CD4-positive, alpha-beta memory T cell (primary cell): ENCODE measurements at regions of chr9 and their contacts with region 1.

Region 1: DNA sequence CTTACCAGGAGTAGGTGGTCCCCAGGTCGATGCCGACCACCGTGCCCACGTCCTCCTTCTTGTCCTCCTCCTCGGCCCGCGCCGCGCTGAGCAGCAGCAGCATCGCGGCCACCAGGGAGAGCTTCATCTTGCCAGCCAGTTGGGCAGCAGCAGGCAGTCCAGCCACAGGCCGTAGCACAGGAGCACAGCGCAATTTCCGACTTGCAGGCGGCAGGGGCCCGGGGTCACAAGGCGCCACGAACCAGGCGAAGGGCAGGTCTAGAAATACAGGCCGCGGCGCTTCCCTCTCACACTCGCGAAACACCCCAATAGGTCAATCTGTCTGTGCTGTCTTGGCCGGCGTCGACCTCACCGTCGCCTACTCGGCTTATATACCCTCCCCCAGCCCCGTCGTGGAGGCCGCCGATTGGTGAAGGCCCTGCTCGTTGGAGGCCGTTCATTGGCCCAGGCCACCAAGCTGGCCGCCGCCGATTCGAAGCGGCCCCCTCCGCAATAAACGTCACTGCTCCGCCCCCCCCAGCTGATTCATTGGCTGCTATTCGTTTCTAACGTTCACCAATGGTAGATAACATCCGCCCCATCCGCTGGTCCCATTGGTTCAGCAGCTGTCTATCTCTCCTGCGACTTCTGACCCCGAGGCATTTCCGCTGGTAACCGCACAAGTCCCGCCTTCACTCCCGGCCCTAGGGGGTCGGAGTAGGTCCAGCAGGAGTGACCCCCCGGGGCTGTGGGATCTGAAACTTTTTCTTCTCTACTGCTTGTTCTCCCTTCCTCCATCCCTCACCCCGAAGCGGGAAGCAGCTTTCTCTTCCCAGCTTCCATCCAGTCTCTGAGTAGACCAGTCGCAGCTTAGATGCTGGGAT is at the start of gene HSPA5:
- DNase-seq: peak; percentile 99 to 100 (median 99)
- H3K4me3 ChIP-seq: peak within 1 kb of the TSS; percentile 92 to 100
- H3K4me3 Mint-ChIP-seq: peak within 1 kb of the TSS; percentile 92 to 99 (median 98)
- H3K27ac ChIP-seq: peak within 1 kb of the TSS; percentile 97
- H3K27ac Mint-ChIP-seq: peak within 1 kb of the TSS; percentile 97 to 100 (median 100)
- H3K4me1 ChIP-seq: peaks cover 50% of the 10 kb centered on the region
- H3K4me1 Mint-ChIP-seq: peaks cover 30 to 60% (median 42%) of the 10 kb centered on the region in 4 donors
- H3K27me3 ChIP-seq: no peaks in the 10 kb centered on the region
- H3K27me3 Mint-ChIP-seq: peaks cover 0 to 3% of the 10 kb centered on the region in 2 donors
- total RNA-seq, gene HSPA5: 147 to 154 TPM

Region 2: DNA sequence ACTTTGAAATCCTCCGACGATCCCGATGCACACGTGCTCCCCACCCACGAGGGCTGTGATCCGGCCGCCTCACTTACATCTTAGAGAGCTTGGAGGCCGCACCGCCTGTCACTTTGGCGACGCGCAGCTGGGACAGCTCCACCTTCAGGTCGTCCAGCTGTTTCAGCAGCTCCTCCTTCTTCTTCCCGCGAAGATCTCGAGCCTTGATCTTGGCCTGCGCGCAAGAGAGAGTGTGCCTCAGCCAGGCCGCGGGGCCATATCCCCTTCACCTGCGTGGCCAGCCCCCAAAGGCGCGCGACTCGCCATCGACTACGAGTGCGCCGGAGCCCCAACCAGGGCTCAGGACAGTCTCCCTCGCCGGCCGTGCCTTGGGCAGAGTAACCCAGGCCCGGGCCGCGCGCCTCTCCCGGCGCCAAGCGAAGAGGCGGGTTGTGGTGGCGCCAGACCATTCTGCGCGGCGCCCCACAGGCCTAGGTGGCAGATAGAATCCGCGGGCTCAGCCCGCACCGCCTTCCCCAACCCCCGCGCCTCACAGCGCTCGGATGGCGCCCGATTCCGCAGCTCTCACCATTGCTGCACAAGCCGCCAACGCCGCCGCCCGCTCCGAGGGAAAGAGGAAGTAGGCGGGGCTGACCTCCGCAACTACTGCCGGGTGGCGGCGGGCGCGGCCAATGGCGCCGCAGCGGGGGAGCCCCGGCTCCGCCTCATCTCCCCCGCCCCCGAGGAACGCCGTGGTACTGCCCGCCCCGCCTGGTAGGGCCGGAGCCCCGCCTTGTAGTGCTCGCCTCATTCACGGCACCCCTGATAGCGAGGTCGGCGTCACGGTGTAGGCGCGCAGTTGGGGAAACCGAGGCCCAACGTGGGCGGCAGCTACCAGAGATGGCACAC is 379.6 kb before region 1 on chr9 and contains the starts of genes ARPC5L and RPL35:
- CTCF ChIA-PET with region 1: no interaction called
- POLR2A ChIA-PET with region 1: interaction called, 14 read pairs
- intact Hi-C with region 1: loop called (anchors 1 kb)
- DNase-seq: peak; percentile 95 to 96 (median 95)
- H3K4me3 ChIP-seq: peak within 1 kb of the TSS; percentile 78 to 84
- H3K4me3 Mint-ChIP-seq: peak within 1 kb of the TSS; percentile 91 to 100 (median 96)
- H3K27ac ChIP-seq: peak within 1 kb of the TSS; percentile 95
- H3K27ac Mint-ChIP-seq: peak within 1 kb of the TSS; percentile 92 to 99 (median 98)
- H3K4me1 ChIP-seq: peaks cover 26% of the 10 kb centered on the region
- H3K4me1 Mint-ChIP-seq: peaks cover 20 to 41% (median 29%) of the 10 kb centered on the region in 4 donors
- H3K27me3 ChIP-seq: no peaks in the 10 kb centered on the region
- H3K27me3 Mint-ChIP-seq: no peaks in the 10 kb centered on the region
- total RNA-seq, gene ARPC5L: 26.8 to 31.4 TPM
- total RNA-seq, gene RPL35: 1,702 to 1,766 TPM

Region 3: GRCh38 chr9:125143375-125144090 is 97.7 kb before region 1 on chr9 and contains the start of gene SCAI:
- CTCF ChIA-PET with region 1: interaction called, 3 read pairs
- POLR2A ChIA-PET with region 1: interaction called, 9 read pairs
- intact Hi-C with region 1: loop called (anchors 1 kb)
- DNase-seq: peak; percentile 97 to 99 (median 99)
- H3K4me3 ChIP-seq: peak within 1 kb of the TSS in 1 of 2 donors; percentile 49
- H3K4me3 Mint-ChIP-seq: peak within 1 kb of the TSS; percentile 93 to 99 (median 98)
- H3K27ac ChIP-seq: peak within 1 kb of the TSS; percentile 16
- H3K27ac Mint-ChIP-seq: peak within 1 kb of the TSS; percentile 85 to 95 (median 91)
- H3K4me1 ChIP-seq: peaks cover 22% of the 10 kb centered on the region
- H3K4me1 Mint-ChIP-seq: peaks cover 17 to 34% (median 26%) of the 10 kb centered on the region in 4 donors
- H3K27me3 ChIP-seq: no peaks in the 10 kb centered on the region
- H3K27me3 Mint-ChIP-seq: no peaks in the 10 kb centered on the region
- total RNA-seq, gene SCAI: 14.7 to 15.5 TPM

Region 4: DNA sequence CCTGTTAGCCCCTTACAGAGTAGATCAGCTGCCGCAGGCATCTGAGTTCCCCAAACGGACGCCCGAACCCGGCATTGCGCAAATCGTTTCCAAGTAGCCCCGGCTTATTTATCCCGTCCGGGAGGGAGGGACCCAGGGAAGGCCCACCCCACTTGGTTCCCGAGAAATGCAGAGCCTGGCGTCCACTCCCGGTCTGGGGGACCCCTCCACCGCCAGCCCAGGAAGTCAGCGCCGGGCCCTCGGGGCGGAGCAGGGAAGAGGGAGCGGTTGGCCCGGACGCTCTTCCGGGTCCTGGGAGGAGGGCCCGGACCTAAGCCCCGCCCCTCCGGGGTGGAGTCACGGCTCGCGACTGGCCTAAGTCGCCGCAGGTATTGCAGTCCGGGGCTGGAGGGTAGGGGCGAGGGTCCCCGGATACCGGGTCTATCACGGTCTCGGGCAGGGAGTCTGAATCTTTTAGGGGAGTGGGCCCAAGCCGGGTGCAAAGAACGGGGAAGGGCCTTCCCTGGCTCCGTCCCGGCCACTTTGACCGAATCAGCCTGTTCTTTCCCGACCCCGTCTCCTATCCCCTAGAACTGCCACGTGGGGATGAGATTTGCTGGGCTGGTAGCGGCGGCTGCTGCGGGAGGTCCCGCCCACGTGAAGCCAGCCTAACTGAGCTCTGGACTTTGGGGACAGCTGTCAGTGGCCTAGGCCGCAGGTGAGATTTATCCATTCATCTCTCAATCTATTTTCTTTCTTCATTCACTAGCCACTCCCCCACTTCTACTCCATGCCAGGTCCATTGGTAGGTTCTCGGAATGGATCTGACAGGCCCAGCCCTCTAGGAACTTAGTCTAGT is 40.8 kb before region 1 on chr9 and contains the start of gene RABEPK:
- CTCF ChIA-PET with region 1: interaction called, 4 read pairs
- POLR2A ChIA-PET with region 1: interaction called, 82 read pairs
- intact Hi-C with region 1: loop called (anchors 1 kb)
- DNase-seq: peak; percentile 83 to 88 (median 86)
- H3K4me3 ChIP-seq: peak within 1 kb of the TSS; percentile 81 to 90
- H3K4me3 Mint-ChIP-seq: peak within 1 kb of the TSS; percentile 91 to 98 (median 93)
- H3K27ac ChIP-seq: peak within 1 kb of the TSS; percentile 80
- H3K27ac Mint-ChIP-seq: peak within 1 kb of the TSS; percentile 92 to 96 (median 94)
- H3K4me1 ChIP-seq: peaks cover 41% of the 10 kb centered on the region
- H3K4me1 Mint-ChIP-seq: peaks cover 29 to 50% (median 35%) of the 10 kb centered on the region in 4 donors
- H3K27me3 ChIP-seq: no peaks in the 10 kb centered on the region
- H3K27me3 Mint-ChIP-seq: no peaks in the 10 kb centered on the region
- total RNA-seq, gene RABEPK: 12.2 to 13.5 TPM

Region 5: DNA sequence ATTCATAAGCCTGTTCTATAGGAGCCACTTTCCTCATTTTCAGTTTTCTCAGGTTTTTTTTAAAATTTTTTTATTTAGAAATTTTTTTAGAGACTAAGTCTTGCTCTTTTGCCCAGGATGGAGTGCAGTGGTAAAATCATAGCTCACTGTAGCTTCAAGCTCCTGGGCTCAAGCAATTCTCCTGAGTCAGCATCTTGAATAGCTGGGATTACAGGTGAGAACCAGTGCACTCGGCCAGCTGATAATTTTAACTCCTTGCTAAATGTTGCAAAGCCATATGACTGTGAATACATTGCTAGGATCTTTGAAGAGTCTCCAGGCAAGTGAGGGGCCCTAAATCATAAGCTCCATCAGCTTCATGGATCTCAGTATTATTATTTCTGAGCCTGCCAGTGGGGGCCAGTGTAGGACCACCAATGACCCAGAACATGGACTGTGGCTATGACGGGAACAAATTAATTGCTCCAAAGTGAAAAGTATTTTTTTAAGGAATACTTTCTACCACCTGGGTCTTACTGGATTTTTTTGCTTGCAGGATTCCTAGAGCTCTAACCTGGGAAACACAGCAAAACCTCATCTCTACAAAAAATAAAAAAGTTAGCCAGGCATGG is 14.7 kb after region 1 on chr9:
- CTCF ChIA-PET with region 1: interaction called, 17 read pairs
- POLR2A ChIA-PET with region 1: interaction called, 98 read pairs
- intact Hi-C with region 1: loop called (anchors 1 kb)
- DNase-seq: no peak
- H3K4me3 ChIP-seq: no peak overlapping the region
- H3K4me3 Mint-ChIP-seq: no peak overlapping the region
- H3K27ac ChIP-seq: no peak overlapping the region
- H3K27ac Mint-ChIP-seq: no peak overlapping the region
- H3K4me1 ChIP-seq: no peaks in the 10 kb centered on the region
- H3K4me1 Mint-ChIP-seq: peaks cover 2 to 8% (median 6%) of the 10 kb centered on the region in 4 donors
- H3K27me3 ChIP-seq: no peaks in the 10 kb centered on the region
- H3K27me3 Mint-ChIP-seq: no peaks in the 10 kb centered on the region

Region 6: GRCh38 chr9:125568621-125569020 is 327.4 kb after region 1 on chr9:
- CTCF ChIA-PET with region 1: no interaction called
- POLR2A ChIA-PET with region 1: no interaction called
- intact Hi-C with region 1: no loop called
- DNase-seq: no peak
- H3K4me3 ChIP-seq: no peak overlapping the region
- H3K4me3 Mint-ChIP-seq: no peak overlapping the region
- H3K27ac ChIP-seq: no peak overlapping the region
- H3K27ac Mint-ChIP-seq: no peak overlapping the region
- H3K4me1 ChIP-seq: no peaks in the 10 kb centered on the region
- H3K4me1 Mint-ChIP-seq: peaks cover 0 to 7% (median 2%) of the 10 kb centered on the region in 4 donors
- H3K27me3 ChIP-seq: no peaks in the 10 kb centered on the region
- H3K27me3 Mint-ChIP-seq: no peaks in the 10 kb centered on the region

Region 7: GRCh38 chr9:126116351-126117157 is 875.3 kb after region 1 on chr9:
- CTCF ChIA-PET with region 1: no interaction called
- POLR2A ChIA-PET with region 1: no interaction called
- intact Hi-C with region 1: no loop called
- DNase-seq: no peak
- H3K4me3 ChIP-seq: no peak overlapping the region
- H3K4me3 Mint-ChIP-seq: no peak overlapping the region
- H3K27ac ChIP-seq: no peak overlapping the region
- H3K27ac Mint-ChIP-seq: no peak overlapping the region
- H3K4me1 ChIP-seq: no peaks in the 10 kb centered on the region
- H3K4me1 Mint-ChIP-seq: no peaks in the 10 kb centered on the region
- H3K27me3 ChIP-seq: peaks cover 5% of the 10 kb centered on the region
- H3K27me3 Mint-ChIP-seq: peaks cover 17 to 23% of the 10 kb centered on the region in 2 donors